Activated T-helper 1 cell treated with anti-CD3 and anti-CD28 coated beads, Interleukin-12 subunit alpha, Interleukin-12 subunit beta, Interleukin-2, Interleukin-4 antibody, amounts not matched to agents 30 ng/mL and 10 ng/mL and 1 ng/mL, durations not matched to agents 14 hours and 24 hours and 36 hours (primary cell): ENCODE measurements at regions of chr1 and their contacts with region 1.

Region 1: GRCh38 chr1:150235852-150236613 is at the start of gene ANP32E:
- DNase-seq: peak; percentile 93
- H3K4me3 Mint-ChIP-seq: no peak within 1 kb of the TSS
- H3K27ac Mint-ChIP-seq: peak within 1 kb of the TSS; percentile 99
- H3K4me1 Mint-ChIP-seq: peaks cover 19% of the 10 kb centered on the region
- H3K27me3 Mint-ChIP-seq: peaks cover 3% of the 10 kb centered on the region
- total RNA-seq, gene ANP32E: 196 and 217 TPM in 2 replicates

Region 2: GRCh38 chr1:149886396-149887195 is 349.4 kb before region 1 on chr1:
- intact Hi-C with region 1: loop called (anchors 1 kb)
- DNase-seq: peak; percentile 90
- H3K4me3 Mint-ChIP-seq: no peak overlapping the region
- H3K27ac Mint-ChIP-seq: no peak overlapping the region
- H3K4me1 Mint-ChIP-seq: peaks cover 13% of the 10 kb centered on the region
- H3K27me3 Mint-ChIP-seq: no peaks in the 10 kb centered on the region

Region 3: DNA sequence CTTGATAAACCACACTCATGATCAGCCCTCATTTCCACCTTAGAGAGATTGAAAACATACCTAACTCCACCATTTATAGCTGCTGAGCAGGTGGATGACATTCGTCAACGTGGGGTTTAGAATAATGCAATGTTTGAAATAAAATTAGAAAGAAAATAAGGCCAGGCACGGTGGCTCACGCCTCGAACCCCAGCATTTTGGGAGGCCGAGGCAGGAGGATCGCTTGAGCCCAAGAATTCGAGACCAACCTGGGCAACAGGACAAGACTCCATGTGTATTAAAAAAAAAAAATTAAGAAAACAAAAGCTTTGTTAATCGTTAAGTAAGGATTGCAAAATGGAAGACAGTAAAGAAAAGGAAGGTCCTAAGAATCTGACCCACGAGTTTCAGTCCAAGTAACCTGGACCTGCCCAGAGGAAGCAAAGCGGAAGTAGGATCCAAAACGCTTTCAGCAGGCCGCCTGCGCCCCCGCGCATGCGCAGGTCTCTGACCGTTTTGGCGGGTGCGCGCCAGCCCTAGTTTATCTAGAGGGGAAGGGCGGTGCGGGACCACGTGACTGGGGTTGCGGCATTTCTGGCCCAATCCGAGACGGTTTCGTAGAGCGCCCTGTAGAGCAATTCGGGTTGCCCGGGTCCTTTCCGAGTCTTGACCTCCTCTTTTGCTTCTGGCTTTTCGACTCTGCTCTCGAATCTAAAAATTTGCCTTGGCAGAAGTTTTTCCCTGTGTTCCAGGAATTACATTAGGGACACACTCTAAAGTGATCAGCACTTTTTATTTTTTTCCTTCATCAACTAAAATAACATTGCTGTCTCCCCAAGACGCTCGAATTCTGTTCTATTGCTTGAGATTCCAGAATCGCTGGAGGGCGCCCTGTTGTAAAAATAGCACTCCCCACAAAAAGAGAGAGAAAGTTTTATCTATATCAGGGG is 22.6 kb before region 1 on chr1:
- intact Hi-C with region 1: loop called (anchors 1 kb)
- DNase-seq: peak; percentile 87
- H3K4me3 Mint-ChIP-seq: peak overlapping the region; percentile 90
- H3K27ac Mint-ChIP-seq: peak overlapping the region; percentile 94
- H3K4me1 Mint-ChIP-seq: peaks cover 19% of the 10 kb centered on the region
- H3K27me3 Mint-ChIP-seq: peaks cover 2% of the 10 kb centered on the region

Region 4: GRCh38 chr1:150281837-150282653 is 46.0 kb after region 1 on chr1 and contains the start of gene CIART:
- intact Hi-C with region 1: loop called (anchors 1 kb)
- DNase-seq: peak; percentile 69
- H3K4me3 Mint-ChIP-seq: peak within 1 kb of the TSS; percentile 87
- H3K27ac Mint-ChIP-seq: peak within 1 kb of the TSS; percentile 80
- H3K4me1 Mint-ChIP-seq: peaks cover 38% of the 10 kb centered on the region
- H3K27me3 Mint-ChIP-seq: peaks cover 4% of the 10 kb centered on the region
- total RNA-seq, gene CIART: 3.4 TPM in 2 replicates

Region 5: DNA sequence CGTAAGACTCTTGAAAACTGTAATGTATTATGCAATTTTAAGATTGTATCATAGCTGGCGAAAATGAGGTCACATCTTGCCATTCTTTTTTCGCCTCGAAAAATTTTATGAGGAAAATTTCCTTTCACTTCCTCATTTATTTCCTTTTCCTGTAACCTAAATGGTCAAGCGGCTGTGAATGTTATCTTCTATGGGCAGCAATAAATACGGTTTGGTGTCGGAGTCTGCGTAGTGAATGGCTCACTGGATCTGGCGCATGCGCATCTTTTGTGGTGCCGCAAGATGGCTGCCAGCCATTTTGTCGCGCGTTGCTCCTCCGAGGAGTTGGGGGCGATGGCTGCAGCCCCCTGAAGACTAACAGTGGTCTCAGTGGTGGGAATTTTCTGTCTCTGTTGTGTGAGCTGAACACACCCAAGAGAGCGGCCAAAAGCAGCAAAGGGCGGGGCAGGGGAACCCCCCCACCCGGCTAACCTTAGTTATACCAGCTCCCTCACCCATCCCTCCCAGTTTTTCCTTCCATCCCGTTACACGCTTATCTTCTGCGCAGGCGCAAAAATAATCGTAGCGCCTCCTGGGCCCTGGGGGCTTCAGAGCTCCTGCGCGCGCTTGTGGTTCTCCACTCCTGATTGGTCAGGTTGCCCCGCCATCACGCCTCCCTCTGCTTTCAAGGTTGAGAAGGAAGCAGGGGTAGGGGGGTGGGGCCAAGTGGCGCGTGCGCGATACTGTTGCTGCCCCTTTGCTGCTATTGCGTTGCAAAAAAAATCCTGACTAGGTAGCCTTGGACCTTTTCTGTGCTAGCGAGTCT is 127.6 kb after region 1 on chr1 and contains the start of gene RPRD2:
- intact Hi-C with region 1: loop called (anchors 1 kb)
- DNase-seq: peak; percentile 99
- H3K4me3 Mint-ChIP-seq: peak within 1 kb of the TSS; percentile 99
- H3K27ac Mint-ChIP-seq: peak within 1 kb of the TSS; percentile 97
- H3K4me1 Mint-ChIP-seq: peaks cover 41% of the 10 kb centered on the region
- H3K27me3 Mint-ChIP-seq: no peaks in the 10 kb centered on the region
- total RNA-seq, gene RPRD2: 24.4 and 24.7 TPM in 2 replicates

Region 6: DNA sequence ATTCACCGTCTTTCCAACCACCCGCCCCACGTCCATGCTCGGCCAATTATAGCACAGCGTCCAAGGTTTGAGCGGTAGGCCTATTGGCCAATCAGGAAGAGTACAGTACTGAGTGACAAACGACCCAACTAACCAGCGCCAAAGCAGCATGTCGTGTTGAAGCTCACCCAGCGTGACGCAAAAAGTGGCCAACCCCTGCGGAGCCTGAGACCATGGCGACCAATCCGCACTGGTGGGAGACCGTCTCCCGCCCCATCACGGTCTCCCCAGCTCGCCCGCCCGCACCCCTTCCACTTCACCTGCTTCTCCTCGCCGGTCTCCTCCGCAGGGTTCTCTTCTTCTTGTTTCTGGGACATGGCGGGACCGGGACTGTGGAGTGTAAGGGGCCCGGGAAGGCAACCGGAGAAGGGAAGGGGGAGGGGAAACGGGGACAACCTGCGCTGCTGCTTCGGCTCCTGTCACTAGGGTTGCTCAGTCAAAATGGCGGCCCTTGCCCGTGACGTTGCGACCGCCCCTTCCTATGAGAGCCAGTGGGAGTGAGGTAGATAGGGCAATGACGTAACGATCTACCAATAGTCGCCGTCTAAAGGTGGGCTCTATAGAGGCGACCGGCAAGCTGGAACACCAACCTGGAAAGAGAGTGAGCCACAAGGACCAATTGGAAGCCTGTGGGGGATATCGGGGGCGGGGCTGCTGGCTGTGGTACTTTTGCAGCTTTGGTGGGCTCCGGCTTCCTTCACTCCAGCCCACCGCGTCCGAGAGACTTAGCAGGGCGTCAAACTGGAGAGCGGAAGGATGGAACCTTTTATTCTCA is 393.3 kb after region 1 on chr1 and contains the start of gene ENSA:
- intact Hi-C with region 1: loop called (anchors 2 kb)
- DNase-seq: peak; percentile 94
- H3K4me3 Mint-ChIP-seq: no peak within 1 kb of the TSS
- H3K27ac Mint-ChIP-seq: no peak within 1 kb of the TSS
- H3K4me1 Mint-ChIP-seq: peaks cover 43% of the 10 kb centered on the region
- H3K27me3 Mint-ChIP-seq: peaks cover 1% of the 10 kb centered on the region
- total RNA-seq, gene ENSA: 282 and 285 TPM in 2 replicates